ENCODE measurements at regions of chrX and their contacts with region 1.

Region 1: DNA sequence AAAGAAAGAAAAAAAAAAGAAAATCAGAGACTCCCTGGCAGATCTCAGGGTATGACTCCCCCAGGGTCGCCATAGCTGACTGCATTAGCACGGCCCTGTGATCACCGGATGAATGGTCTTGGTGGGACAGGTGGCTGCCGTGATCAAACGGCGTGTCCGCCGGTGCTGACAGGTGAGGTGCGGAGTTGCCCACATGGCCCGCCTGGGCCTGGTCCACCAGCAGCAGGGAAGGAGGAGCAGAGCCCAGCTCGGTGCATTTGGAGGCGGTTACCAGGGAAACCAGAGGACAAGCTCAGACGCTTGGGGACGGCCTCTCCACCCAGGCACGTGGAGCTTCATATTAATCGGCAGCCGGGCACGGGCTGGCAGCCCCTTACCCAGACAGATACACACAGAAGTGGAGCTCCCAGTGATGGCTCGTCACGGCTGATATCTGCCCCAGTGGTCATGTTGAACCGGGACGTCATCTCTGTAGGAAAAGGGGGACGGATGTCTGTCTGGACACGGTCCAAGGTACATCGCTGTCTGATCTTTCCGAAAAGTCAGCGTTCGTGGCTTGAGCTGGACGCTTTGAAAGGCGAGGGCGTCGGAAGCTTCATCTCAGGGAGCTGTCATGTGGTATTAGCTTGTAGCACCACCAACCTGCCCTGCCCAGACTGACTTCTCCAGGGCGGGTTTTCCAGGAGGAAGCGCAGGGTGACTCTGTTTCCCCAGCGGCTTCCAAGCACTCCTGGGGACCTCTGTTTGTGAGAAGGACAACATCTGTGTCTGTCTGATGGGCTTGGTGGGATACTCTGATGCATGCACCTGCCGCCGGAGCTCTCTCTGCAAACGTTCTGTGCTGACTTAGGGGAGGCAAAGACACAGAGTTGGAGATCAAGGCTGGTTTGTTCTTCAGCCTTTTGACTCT is 180.7 kb downstream of the CRLF2 start:
- DNase-seq: no peak
- ATAC-seq: no peak
- H3K4me3 ChIP-seq: no peak overlapping the region
- H3K27ac ChIP-seq: no peak overlapping the region
- H3K4me1 ChIP-seq: peaks cover 7% of the 10 kb centered on the region
- H3K27me3 ChIP-seq: no peaks in the 10 kb centered on the region
- CTCF ChIP-seq: no peak
- EP300 ChIP-seq: no peak
- POLR2A ChIP-seq: no peak
- RAD21 ChIP-seq: no peak

Region 2: DNA sequence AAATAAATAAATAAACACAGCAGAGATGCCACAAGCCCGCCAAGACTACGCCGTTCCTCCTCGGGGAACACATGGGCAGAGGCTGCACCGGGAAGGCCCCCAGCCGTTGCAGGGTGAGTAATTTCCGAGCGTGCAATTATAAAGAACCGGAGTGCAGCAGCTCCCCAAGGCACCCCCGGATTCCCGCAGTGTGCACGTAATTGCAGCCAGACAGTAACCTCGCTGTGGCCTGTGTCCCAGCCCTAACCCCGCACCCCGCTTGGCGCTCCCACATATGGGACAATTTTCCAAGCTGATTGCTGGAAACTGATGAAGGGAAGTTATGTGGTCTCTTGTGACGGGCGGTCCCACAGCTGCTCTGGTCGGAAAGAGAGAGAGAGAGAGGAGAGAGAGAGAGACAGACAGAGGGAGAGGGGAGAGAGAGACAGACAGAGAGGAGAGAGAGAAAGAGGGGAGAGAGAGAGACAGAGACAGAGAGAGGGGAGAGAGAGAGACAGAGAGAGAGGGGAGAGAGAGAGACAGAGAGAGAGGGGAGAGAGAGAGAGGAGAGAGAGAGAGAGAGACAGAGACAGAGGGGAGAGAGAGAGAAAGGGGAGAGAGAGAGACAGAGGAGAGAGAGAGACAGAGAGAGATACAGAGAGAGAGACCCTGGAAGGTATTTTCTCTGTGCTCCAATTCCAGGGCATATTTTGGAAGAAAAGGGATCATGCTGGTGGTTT is 125.8 kb before region 1 on chrX:
- CTCF ChIA-PET with region 1: no interaction called
- POLR2A ChIA-PET with region 1: no interaction called
- RAD21 ChIA-PET with region 1: no interaction called
- SMC1A ChIA-PET with region 1: no interaction called
- in situ Hi-C with region 1: no loop called
- intact Hi-C with region 1: no loop called
- DNase-seq: no peak
- ATAC-seq: no peak
- H3K4me3 ChIP-seq: no peak overlapping the region
- H3K27ac ChIP-seq: no peak overlapping the region
- H3K4me1 ChIP-seq: no peaks in the 10 kb centered on the region
- H3K27me3 ChIP-seq: no peaks in the 10 kb centered on the region
- CTCF ChIP-seq: no peak
- EP300 ChIP-seq: no peak
- POLR2A ChIP-seq: no peak
- RAD21 ChIP-seq: no peak

Region 3: DNA sequence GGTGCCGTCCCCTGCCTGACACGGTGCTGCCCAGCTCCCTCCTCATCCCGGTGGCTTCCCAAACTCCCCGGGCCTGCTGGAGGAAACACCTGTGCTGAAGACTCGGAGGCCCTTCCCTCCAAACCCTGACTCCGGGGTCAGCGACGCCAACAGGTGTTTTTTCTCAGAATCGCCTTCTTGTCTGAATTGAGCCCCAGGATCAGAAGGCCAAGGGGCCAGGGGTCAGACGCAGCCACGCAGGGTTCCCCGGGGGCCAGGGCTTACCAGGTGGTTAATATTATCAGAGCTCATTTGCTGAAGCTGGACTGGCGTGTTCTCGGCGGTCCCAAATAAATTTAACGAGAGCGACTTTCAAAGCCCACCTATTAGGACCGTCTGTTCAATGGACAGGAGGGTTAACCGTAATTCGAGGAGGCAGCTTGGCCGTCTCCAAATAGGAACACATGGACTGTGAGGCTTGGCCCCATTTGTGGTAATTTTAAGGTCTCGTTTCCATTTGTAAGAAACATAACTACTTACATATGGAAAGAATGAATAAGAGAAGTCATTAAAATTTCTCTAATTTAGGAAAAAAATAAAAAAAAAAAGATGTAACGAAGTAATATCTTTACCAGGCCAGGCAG is 58.7 kb before region 1 on chrX:
- CTCF ChIA-PET with region 1: no interaction called
- POLR2A ChIA-PET with region 1: no interaction called
- RAD21 ChIA-PET with region 1: no interaction called
- SMC1A ChIA-PET with region 1: no interaction called
- in situ Hi-C with region 1: loop called (anchors 10 kb)
- intact Hi-C with region 1: no loop called
- DNase-seq: no peak
- ATAC-seq: no peak
- H3K4me3 ChIP-seq: no peak overlapping the region
- H3K27ac ChIP-seq: no peak overlapping the region
- H3K4me1 ChIP-seq: no peaks in the 10 kb centered on the region
- H3K27me3 ChIP-seq: no peaks in the 10 kb centered on the region
- CTCF ChIP-seq: no peak
- EP300 ChIP-seq: no peak
- POLR2A ChIP-seq: no peak
- RAD21 ChIP-seq: no peak

Region 4: DNA sequence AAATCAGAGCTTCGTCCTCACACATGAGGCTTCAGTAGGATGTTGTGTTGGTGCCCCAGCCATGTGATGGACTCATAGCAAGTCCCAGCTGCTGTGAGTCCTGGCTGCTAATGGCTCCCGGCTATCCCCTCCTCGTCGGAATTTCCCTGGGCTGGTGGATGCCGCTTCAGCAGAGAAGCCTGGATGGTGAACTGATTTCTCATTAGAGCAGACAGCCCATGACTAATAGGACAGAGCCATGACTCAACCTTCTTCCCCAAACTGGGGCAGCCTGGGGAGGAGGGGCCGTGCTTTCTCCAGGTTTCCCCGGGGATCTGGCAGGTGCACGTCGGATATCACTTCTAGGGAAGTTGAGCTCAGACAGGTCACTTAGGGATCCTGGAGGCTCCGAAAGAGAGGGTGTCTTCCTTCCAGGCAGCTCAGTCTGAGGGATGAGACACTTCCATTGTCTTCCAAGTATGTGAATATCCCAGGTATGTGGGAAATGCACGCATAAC is 695.8 kb after region 1 on chrX:
- CTCF ChIA-PET with region 1: no interaction called
- POLR2A ChIA-PET with region 1: no interaction called
- RAD21 ChIA-PET with region 1: no interaction called
- SMC1A ChIA-PET with region 1: no interaction called
- in situ Hi-C with region 1: no loop called
- intact Hi-C with region 1: no loop called
- DNase-seq: no peak
- ATAC-seq: no peak
- H3K4me3 ChIP-seq: no peak overlapping the region
- H3K27ac ChIP-seq: no peak overlapping the region
- H3K4me1 ChIP-seq: no peaks in the 10 kb centered on the region
- H3K27me3 ChIP-seq: no peaks in the 10 kb centered on the region
- CTCF ChIP-seq: no peak
- EP300 ChIP-seq: no peak
- POLR2A ChIP-seq: no peak
- RAD21 ChIP-seq: no peak